Breast epithelium (tissue), 4 donors: ENCODE measurements at regions of chr4 and their contacts with region 1.

Region 1: GRCh38 chr4:107094976-107095375 is 58.9 kb upstream of the DKK2 start:
- DNase-seq: no peak
- H3K4me3 ChIP-seq: no peak overlapping the region
- H3K27ac ChIP-seq: no peak overlapping the region
- H3K4me1 ChIP-seq: no peaks in the 10 kb centered on the region
- H3K27me3 ChIP-seq: no peaks in the 10 kb centered on the region
- CTCF ChIP-seq: no peak
- POLR2A ChIP-seq: no peak

Region 2: GRCh38 chr4:106707776-106708463 is 387.1 kb before region 1 on chr4:
- intact Hi-C with region 1: no loop called
- DNase-seq: no peak
- H3K4me3 ChIP-seq: no peak overlapping the region
- H3K27ac ChIP-seq: no peak overlapping the region
- H3K4me1 ChIP-seq: no peaks in the 10 kb centered on the region
- H3K27me3 ChIP-seq: no peaks in the 10 kb centered on the region
- CTCF ChIP-seq: no peak
- POLR2A ChIP-seq: no peak

Region 3: DNA sequence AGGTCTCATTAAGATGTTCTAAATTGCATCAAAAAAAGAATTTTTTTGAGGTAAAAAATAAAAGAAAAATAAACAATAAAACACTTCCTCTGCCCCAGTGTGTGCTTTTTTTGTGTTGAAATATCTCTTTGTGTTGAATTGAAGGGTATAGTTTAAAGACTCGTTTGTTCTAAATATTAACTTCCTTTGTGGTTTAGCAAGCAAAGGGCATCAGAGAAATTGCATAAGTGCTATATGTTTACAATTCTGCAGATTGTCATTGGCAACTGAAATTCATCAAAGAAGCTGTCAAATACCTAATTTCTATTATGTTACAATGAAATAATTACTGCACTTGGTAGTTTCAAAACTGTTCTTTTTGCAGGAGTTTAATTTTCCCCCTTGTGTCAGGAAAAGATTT is 319.3 kb before region 1 on chr4:
- intact Hi-C with region 1: no loop called
- DNase-seq: no peak
- H3K4me3 ChIP-seq: no peak overlapping the region
- H3K27ac ChIP-seq: no peak overlapping the region
- H3K4me1 ChIP-seq: no peaks in the 10 kb centered on the region
- H3K27me3 ChIP-seq: no peaks in the 10 kb centered on the region
- CTCF ChIP-seq: no peak
- POLR2A ChIP-seq: no peak

Region 4: GRCh38 chr4:107017443-107018343 is 77.3 kb before region 1 on chr4:
- intact Hi-C with region 1: loop called (anchors 5 kb)
- DNase-seq: no peak
- H3K4me3 ChIP-seq: no peak overlapping the region
- H3K27ac ChIP-seq: no peak overlapping the region
- H3K4me1 ChIP-seq: no peaks in the 10 kb centered on the region
- H3K27me3 ChIP-seq: no peaks in the 10 kb centered on the region
- CTCF ChIP-seq: no peak
- POLR2A ChIP-seq: no peak